Calu3 (cell line): ENCODE measurements at regions of chr7 and their contacts with region 1.

Region 1: GRCh38 chr7:134121632-134122139 is 5.5 kb upstream of the LRGUK start:
- DNase-seq: no peak
- H3K4me3 Mint-ChIP-seq: no peak overlapping the region
- H3K27ac Mint-ChIP-seq: no peak overlapping the region
- H3K4me1 Mint-ChIP-seq: peaks cover 2% of the 10 kb centered on the region
- H3K27me3 Mint-ChIP-seq: peaks cover 45% of the 10 kb centered on the region
- CTCF ChIP-seq: no peak

Region 2: DNA sequence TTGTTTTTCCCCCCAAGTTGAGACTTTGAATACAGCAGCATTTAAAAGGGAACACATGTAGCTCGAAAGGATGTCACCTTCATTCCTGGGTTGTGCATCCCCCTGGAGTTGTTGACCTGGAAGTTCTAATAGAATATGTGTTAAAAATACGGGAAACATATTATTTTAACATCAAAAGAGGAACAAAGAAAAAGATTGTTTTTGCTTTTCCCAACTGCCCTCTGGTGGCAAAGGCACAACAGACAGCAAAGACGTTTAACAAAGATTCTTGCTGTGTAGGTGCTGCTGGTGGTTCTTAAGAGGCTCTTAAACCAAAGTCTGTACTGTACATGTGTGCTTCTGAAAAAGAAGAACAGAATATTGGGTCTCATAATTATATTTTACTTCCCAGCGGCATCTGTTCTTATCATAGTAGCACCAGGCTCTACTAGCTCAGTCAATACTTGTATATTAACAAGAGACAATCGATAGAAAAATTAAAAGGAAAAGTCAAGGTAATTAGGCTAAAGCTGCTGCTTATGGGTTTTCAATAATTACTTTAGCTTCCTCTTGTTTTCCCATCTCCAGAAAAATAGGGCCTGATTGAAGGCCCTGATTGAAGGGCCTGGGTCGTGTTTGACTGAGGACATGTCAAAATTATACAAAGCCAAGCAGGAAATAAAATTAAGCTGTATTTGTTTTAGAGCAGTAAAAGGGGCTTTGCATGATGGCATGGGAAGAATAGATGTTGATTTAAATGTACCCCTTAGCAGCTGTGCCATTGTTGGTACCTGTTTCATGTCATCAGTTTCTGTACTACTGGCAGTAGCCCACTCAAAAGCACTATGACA is 378.8 kb before region 1 on chr7:
- CTCF ChIA-PET with region 1: no interaction called
- intact Hi-C with region 1: no loop called
- DNase-seq: peak; percentile 30
- H3K4me3 Mint-ChIP-seq: no peak overlapping the region
- H3K27ac Mint-ChIP-seq: no peak overlapping the region
- H3K4me1 Mint-ChIP-seq: peaks cover 63% of the 10 kb centered on the region
- H3K27me3 Mint-ChIP-seq: no peaks in the 10 kb centered on the region
- CTCF ChIP-seq: peak; percentile 53

Region 3: GRCh38 chr7:134084488-134085144 is 37.1 kb before region 1 on chr7:
- CTCF ChIA-PET with region 1: no interaction called
- intact Hi-C with region 1: loop called (anchors 5 kb)
- DNase-seq: no peak
- H3K4me3 Mint-ChIP-seq: no peak overlapping the region
- H3K27ac Mint-ChIP-seq: no peak overlapping the region
- H3K4me1 Mint-ChIP-seq: no peaks in the 10 kb centered on the region
- H3K27me3 Mint-ChIP-seq: no peaks in the 10 kb centered on the region
- CTCF ChIP-seq: no peak